GM12878 (cell line): ENCODE measurements at regions of chr1 and their contacts with region 1.

Region 1: GRCh38 chr1:40385437-40386358 is 12.2 kb downstream of the SMAP2 start:
- DNase-seq: peak; percentile 98
- ATAC-seq: peak; percentile 72
- H3K4me3 ChIP-seq: peak overlapping the region; percentile 66
- H3K27ac ChIP-seq: peak overlapping the region; percentile 97
- H3K4me1 ChIP-seq: peaks cover 65% of the 10 kb centered on the region
- H3K27me3 ChIP-seq: no peaks in the 10 kb centered on the region
- CTCF ChIP-seq: no peak
- EP300 ChIP-seq: peak; percentile 98 to 99
- POLR2A ChIP-seq: no peak
- RAD21 ChIP-seq: peak; percentile 15; the same call in 1 of the 2 replicates

Region 2: GRCh38 chr1:40373338-40374283 is 12.1 kb before region 1 on chr1 and contains the start of gene SMAP2:
- CTCF ChIA-PET with region 1: interaction called, 39 read pairs
- POLR2A ChIA-PET with region 1: interaction called, 105 read pairs
- RAD21 ChIA-PET with region 1: interaction called, 59 read pairs
- SMC1A ChIA-PET with region 1: interaction called, 93 read pairs
- in situ Hi-C with region 1: no loop called
- intact Hi-C with region 1: no loop called
- DNase-seq: peak; percentile 85
- ATAC-seq: peak; percentile 87
- H3K4me3 ChIP-seq: peak within 1 kb of the TSS; percentile 86
- H3K27ac ChIP-seq: peak within 1 kb of the TSS; percentile 94
- H3K4me1 ChIP-seq: peaks cover 9% of the 10 kb centered on the region
- H3K27me3 ChIP-seq: no peaks in the 10 kb centered on the region
- CTCF ChIP-seq: no peak
- EP300 ChIP-seq: no peak
- POLR2A ChIP-seq: peak; percentile 89
- RAD21 ChIP-seq: no peak
- polyA plus RNA-seq, gene SMAP2: 33.4 to 42.4 TPM